ENCODE measurements at regions of chr16 and their contacts with region 1.

Region 1: DNA sequence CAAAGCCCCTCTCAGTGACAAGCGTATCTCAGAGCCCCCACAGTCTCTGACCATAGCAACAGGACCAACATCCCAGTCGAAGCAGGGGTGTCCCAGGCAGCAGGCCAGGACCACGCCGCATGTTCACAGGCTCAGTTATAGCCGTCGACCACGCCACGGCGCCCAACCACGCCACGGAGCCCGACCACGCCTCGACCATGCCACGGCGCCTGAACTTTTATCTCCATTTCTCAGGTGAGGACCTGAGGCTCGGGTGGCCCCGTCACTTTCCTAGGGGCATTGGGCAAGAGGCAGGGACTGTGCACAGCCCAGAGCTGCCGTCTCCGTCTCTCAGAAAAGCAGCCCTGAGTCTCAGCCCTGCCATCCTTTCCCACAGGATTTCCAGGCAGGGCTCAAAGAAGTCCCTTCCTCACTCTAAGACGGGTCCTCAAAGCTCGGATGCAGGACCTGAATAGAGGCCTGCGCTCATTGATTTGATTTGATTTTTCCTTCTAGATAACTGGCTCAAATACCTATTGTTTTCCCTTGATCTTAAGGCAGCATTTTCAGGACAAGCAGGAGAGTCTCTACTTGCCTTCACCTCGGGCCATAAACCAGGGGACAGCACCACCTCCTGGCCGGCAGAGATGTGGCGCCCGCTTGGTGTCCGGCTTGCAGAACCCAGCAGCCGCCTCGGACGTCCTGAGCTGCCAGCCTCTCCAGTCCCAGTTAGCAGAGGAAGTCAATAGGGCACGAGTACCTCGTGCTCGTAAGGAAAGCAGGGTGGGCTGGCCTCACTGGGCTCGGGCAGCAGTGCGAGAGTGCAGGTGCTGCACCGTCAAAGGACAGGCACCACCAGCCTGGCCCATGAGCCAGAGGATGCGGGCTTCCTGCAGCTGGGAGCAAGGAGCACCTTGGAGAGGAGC is 38.7 kb downstream of the C16orf95 start:
- DNase-seq: peak; percentile 56 to 93
- H3K4me3 ChIP-seq: no peak overlapping the region
- CTCF ChIP-seq: peak in 1 of 3 donors; percentile 51
- POLR2A ChIP-seq: no peak

Region 2: DNA sequence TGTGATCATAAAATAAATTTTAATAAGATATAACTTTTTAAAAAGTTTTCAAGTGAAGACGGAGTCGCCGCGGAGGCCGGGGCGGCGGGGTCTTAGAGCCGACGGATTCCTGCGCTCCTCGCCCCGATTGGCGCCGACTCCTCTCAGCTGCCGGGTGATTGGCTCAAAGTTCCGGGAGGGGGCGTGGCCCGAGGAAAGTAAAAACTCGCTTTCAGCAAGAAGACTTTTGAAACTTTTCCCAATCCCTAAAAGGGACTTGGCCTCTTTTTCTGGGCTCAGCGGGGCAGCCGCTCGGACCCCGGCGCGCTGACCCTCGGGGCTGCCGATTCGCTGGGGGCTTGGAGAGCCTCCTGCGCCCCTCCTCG is 711.9 kb before region 1 on chr16 and contains the start of gene FOXC2:
- intact Hi-C with region 1: loop called (anchors 5 kb)
- DNase-seq: peak; percentile 63 to 95
- H3K4me3 ChIP-seq: no peak within 1 kb of the TSS
- CTCF ChIP-seq: no peak
- POLR2A ChIP-seq: no peak
- total RNA-seq, gene FOXC2: 0.16 to 0.32 (median 0.17) TPM in 3 of 4 donors, not detected in the other

Region 3: DNA sequence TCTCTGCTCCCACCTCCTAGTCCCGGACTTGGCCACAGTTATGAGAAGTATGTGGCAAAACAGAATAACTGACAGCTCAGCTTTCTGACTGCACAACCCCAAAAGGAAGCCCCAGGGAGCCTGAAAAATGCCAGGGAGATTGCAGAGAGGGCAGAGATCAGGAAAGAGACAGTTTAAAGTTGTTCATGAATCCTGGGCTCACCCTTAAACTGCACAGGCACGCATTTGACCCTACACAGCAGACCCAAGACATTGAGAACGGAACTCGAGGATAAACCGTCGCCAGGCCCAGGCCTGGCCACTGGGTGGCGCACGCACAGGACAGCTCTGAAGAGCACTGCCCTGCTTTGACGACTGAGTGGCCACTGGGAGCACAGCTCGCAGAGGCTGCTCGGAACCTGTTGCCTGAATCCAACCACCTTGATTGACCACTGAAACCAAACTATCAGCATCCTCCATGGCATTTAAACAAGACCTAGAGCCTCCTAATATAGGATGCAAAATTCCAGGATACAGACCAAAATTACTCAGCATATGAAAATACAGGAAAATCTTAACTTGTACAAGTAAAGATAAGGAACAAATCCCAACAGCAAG is 75.3 kb before region 1 on chr16:
- intact Hi-C with region 1: loop called (anchors 10 kb)
- DNase-seq: no peak
- H3K4me3 ChIP-seq: no peak overlapping the region
- CTCF ChIP-seq: no peak
- POLR2A ChIP-seq: no peak

Region 4: DNA sequence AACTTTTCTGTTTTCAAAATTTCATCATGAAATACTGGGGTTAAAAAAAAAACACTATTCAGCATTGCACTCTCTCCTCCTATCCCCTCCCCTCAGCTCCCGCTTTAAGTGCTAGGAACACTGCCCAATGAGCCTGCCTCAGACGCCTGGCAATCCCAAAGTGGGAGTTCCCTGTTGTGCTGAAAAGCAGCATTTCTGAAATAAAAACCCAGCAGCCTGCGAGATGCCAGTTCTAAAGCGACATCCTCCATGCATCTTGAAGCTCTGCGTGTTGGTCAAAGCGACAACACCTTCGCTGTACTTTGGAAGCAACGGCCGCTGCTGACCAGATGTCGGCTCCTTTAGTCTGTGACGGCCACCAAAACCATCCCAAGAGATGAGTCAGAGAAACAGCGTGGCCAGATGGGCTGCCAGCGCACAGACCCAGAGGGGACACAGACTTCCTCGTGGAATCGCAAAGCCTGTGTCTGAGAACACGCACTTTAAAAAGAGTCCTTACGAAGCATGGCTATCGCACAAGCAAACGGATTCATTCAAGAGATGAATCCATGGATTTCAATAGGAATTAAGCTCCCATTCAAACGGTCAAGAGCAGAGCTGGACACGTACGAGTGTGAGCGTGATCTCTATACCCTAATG is 72.4 kb after region 1 on chr16:
- intact Hi-C with region 1: no loop called
- DNase-seq: no peak
- H3K4me3 ChIP-seq: no peak overlapping the region
- CTCF ChIP-seq: no peak
- POLR2A ChIP-seq: no peak

Measured in lower leg skin (tissue), 4 donors.